MCF 10A (cell line): ENCODE measurements at regions of chr15 and their contacts with region 1.

Region 1: DNA sequence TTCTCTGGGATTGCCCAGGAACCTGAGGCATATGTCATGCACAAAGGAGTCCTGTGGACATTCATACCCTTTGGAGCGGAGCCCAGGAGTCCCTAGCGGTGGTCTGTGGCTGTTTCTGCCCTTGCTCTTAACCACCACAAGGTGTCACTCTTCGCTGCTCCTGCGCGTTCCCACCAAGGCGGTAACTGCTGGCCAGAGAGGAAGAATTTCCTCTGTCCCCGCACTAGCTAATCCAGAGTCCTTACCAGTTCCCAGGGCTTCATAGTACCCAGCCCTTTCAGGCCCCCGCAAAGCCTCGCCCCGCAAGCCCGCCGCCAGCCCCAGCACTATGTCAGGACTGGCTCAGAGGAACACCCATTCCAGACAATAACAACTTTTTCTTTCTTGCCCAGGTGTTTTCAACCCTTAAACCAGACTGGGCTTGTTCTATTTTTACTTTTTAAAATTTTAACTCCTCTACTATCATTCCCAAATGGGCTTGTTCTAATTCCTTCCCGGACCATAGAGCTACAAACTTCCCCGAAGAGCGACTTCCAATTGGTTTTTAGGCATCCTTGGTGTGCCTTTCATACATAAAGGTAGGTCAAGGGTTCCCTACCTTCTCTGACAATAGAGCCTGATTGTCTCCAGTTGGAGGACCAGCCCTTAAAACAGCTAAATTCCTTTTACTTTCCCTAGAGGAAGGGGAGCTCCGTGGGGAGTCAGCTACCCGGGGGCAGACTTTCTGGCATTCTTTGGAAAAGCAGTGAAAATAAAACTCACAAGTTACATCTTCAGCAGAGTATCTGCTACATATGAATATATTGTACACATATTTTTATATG is 31.8 kb upstream of the ZNF774 start:
- DNase-seq: peak; percentile 92
- H3K4me3 Mint-ChIP-seq: peak overlapping the region; percentile 2
- H3K27ac Mint-ChIP-seq: peak overlapping the region; percentile 89
- H3K4me1 Mint-ChIP-seq: peaks cover 19% of the 10 kb centered on the region
- H3K27me3 Mint-ChIP-seq: no peaks in the 10 kb centered on the region
- CTCF ChIP-seq: peak; percentile 98

Region 2: GRCh38 chr15:90336705-90337141 is 16.4 kb after region 1 on chr15:
- CTCF ChIA-PET with region 1: interaction called, 25 read pairs
- POLR2A ChIA-PET with region 1: interaction called, 5 read pairs
- intact Hi-C with region 1: no loop called
- DNase-seq: peak; percentile 84
- H3K4me3 Mint-ChIP-seq: no peak overlapping the region
- H3K27ac Mint-ChIP-seq: no peak overlapping the region
- H3K4me1 Mint-ChIP-seq: peaks cover 16% of the 10 kb centered on the region
- H3K27me3 Mint-ChIP-seq: no peaks in the 10 kb centered on the region
- CTCF ChIP-seq: no peak

Region 3: GRCh38 chr15:90394748-90395442 is 74.6 kb after region 1 on chr15:
- CTCF ChIA-PET with region 1: interaction called, 14 read pairs
- POLR2A ChIA-PET with region 1: interaction called, 4 read pairs
- intact Hi-C with region 1: no loop called
- DNase-seq: no peak
- H3K4me3 Mint-ChIP-seq: no peak overlapping the region
- H3K27ac Mint-ChIP-seq: peak overlapping the region; percentile 84
- H3K4me1 Mint-ChIP-seq: peaks cover 54% of the 10 kb centered on the region
- H3K27me3 Mint-ChIP-seq: no peaks in the 10 kb centered on the region
- CTCF ChIP-seq: no peak

Region 4: GRCh38 chr15:90469723-90470122 is 149.4 kb after region 1 on chr15:
- CTCF ChIA-PET with region 1: interaction called, 17 read pairs
- POLR2A ChIA-PET with region 1: interaction called, 3 read pairs
- intact Hi-C with region 1: loop called (anchors 5 kb)
- DNase-seq: no peak
- H3K4me3 Mint-ChIP-seq: no peak overlapping the region
- H3K27ac Mint-ChIP-seq: no peak overlapping the region
- H3K4me1 Mint-ChIP-seq: peaks cover 16% of the 10 kb centered on the region
- H3K27me3 Mint-ChIP-seq: no peaks in the 10 kb centered on the region
- CTCF ChIP-seq: no peak

Region 5: DNA sequence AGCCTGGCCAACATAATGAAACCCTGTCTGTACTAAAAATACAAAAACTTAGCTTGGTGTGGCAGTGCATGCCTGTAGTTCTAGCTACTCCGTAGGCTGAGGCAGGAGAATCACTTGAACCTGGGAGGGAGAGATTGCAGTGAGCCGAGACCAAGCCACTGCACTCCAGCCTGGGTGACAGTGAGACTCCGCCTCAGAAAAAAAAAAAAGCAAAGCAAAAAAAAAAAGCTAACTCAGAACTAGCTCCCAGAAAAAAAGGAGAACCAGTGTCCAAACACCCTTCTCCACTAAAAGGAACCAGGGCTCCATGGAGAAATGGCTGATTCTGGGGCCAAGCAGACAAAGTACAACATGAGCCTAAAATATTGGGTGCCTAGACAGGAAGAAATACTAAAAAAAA is 192.7 kb after region 1 on chr15:
- CTCF ChIA-PET with region 1: interaction called, 14 read pairs
- POLR2A ChIA-PET with region 1: no interaction called
- intact Hi-C with region 1: no loop called
- DNase-seq: no peak
- H3K4me3 Mint-ChIP-seq: no peak overlapping the region
- H3K27ac Mint-ChIP-seq: no peak overlapping the region
- H3K4me1 Mint-ChIP-seq: no peaks in the 10 kb centered on the region
- H3K27me3 Mint-ChIP-seq: no peaks in the 10 kb centered on the region
- CTCF ChIP-seq: no peak